ENCODE measurements at regions of chr3 and their contacts with region 1.

Region 1: DNA sequence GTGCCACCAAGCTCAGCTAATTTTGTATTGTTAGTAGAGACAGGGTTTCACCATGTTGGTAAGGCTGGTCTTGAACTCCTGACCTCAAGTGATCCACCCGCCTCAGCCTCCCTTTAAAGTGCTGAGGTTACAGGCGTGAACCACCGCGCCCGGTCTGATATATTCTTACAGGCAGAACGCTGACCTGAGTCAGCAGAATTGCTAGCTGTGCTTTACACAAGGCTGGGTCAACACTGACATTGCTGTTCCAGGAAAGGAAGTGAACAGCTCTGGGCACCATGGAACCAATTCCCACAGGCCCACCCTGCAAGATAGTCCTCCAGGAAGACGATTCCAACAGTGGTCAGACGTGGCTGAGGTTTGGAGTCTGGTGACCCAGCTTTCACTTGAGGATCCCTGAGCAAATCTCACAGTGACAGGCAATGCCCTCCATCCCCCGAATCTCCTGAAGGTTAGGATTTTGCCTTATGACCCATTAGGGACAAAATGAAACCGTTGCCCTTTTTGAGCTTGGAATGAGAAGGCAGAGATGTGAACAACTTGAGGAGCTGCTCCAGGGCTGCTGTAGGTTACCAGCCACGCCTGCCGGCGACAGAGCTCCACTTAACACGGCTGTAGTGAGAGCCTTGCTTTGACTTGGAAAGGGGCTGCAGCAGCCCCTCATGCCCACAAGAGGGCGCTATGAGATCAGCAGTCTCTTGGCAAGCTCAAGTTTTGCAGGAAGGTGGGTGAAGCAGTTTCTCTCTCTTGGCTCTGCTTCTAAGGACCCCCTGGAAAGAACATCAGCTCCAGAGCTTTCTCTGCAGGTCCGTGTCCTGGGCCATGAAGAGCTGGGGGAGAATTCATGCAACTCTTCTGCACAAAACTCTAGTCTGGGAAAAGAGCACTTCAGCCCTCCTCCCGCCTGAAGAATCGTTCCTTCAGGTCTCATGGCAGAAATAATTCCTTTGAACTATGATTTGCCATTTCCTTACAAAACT is 74.1 kb downstream of the SENP2 start:
- DNase-seq: peak; percentile 84
- H3K4me3 Mint-ChIP-seq: no peak overlapping the region
- H3K27ac Mint-ChIP-seq: peak overlapping the region; percentile 86
- H3K4me1 Mint-ChIP-seq: peaks cover 53% of the 10 kb centered on the region
- H3K27me3 Mint-ChIP-seq: no peaks in the 10 kb centered on the region
- CTCF ChIP-seq: peak; percentile 97

Region 2: DNA sequence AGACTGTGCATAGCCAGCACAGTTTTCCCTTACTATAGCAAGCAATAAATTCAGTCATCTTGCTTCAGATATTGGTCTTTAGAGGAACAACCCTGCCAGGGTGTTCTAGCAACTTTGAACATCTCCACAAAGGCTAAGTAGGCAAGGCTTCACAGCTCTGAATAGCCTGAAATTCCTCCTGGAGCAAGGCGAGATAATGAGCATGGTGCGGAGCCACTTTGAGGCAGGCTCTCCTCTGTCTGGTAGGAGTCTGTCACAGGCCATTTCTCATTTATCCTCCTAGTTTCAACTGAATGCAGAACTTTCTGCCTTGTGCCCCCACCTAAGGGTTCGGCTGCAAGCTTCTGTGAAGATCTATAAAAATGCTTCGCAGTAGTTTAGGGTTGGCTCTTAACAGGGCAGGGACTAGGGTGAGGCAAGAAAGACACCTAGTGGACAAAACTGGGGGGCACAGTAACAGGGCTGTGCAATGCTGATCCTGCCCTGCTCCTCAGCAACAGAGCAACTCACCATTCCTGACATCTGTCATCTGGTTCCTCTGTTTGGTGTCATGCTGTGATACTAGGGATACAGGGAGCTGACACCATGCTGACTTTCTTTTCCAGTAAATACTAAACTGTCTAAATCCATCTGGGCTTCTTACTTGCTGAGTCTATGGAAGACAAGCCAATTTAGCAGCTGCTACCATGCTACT is 389.8 kb before region 1 on chr3:
- CTCF ChIA-PET with region 1: no interaction called
- POLR2A ChIA-PET with region 1: no interaction called
- intact Hi-C with region 1: no loop called
- DNase-seq: peak; percentile 41
- H3K4me3 Mint-ChIP-seq: no peak overlapping the region
- H3K27ac Mint-ChIP-seq: no peak overlapping the region
- H3K4me1 Mint-ChIP-seq: no peaks in the 10 kb centered on the region
- H3K27me3 Mint-ChIP-seq: peaks cover 24% of the 10 kb centered on the region
- CTCF ChIP-seq: peak; percentile 34

Region 3: DNA sequence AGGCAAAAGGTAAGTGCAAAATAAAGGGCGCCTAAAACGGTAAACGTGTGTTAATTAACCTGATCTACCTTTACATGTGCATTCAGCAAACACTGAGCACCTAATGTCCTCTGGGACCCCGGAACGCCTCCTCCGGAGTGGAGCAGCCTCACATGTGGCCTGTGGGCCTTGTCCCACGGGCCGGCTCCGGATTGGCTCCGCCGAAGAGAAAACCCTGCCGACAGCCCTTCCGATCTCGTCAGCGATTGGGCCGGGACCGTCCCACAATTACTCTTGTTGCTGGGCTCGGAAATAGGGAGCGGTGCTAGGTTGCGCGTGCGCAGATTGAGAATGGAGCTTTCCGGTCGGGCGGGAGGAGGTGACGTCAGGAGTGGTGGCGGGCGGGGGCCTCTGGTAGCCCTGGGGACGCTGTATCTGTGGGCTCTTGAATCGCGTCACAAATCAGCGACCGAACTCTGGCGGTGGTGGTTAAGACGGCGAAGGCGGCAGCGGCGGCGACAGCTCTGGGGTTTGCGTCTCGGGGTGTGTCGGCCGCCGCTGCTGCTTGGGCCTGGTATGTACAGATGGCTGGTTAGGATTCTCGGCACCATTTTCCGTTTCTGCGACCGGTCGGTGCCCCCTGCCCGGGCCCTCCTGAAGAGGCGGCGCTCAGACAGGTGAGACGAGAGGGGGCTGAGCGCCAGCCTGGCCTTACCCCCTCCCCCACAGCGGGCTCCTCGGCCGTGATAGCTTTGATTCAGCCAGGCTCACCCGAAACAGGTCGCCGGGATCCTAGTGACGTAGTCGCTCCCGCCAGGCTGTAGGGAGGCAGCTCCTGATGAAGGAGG is 74.2 kb before region 1 on chr3 and contains the start of gene SENP2:
- CTCF ChIA-PET with region 1: no interaction called
- POLR2A ChIA-PET with region 1: interaction called, 12 read pairs
- intact Hi-C with region 1: no loop called
- DNase-seq: peak; percentile 99
- H3K4me3 Mint-ChIP-seq: peak within 1 kb of the TSS; percentile 96
- H3K27ac Mint-ChIP-seq: peak within 1 kb of the TSS; percentile 98
- H3K4me1 Mint-ChIP-seq: peaks cover 10% of the 10 kb centered on the region
- H3K27me3 Mint-ChIP-seq: no peaks in the 10 kb centered on the region
- CTCF ChIP-seq: no peak
- total RNA-seq, gene SENP2: 27.0 and 38.5 TPM in 2 replicates

Region 4: GRCh38 chr3:185677146-185677829 is 17.1 kb after region 1 on chr3:
- CTCF ChIA-PET with region 1: interaction called, 94 read pairs
- POLR2A ChIA-PET with region 1: interaction called, 6 read pairs
- intact Hi-C with region 1: no loop called
- DNase-seq: peak; percentile 79
- H3K4me3 Mint-ChIP-seq: no peak overlapping the region
- H3K27ac Mint-ChIP-seq: peak overlapping the region; percentile 63
- H3K4me1 Mint-ChIP-seq: peaks cover 8% of the 10 kb centered on the region
- H3K27me3 Mint-ChIP-seq: no peaks in the 10 kb centered on the region
- CTCF ChIP-seq: peak; percentile 70

Region 5: DNA sequence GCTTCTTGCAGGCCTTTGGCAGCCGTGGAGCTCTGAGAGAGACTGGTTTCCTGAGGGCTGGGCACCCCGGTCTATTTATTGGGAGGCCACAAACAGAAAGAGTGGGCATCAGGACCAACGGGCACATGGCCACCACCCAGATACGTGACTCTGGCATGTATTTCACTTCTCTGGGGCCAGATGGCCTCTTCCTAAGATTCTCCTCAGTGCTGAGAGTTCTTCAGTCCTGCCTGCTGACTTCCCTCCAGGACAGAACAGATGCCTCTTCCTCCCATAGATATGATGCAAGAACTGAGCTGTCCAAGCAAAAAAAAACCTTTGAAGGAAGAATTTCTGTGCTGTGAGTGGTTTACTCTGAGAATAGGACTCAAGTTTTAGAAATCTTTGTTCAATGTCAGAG is 56.9 kb after region 1 on chr3:
- CTCF ChIA-PET with region 1: interaction called, 14 read pairs
- POLR2A ChIA-PET with region 1: interaction called, 19 read pairs
- intact Hi-C with region 1: no loop called
- DNase-seq: peak; percentile 74
- H3K4me3 Mint-ChIP-seq: peak overlapping the region; percentile 40
- H3K27ac Mint-ChIP-seq: peak overlapping the region; percentile 96
- H3K4me1 Mint-ChIP-seq: peaks cover 55% of the 10 kb centered on the region
- H3K27me3 Mint-ChIP-seq: no peaks in the 10 kb centered on the region
- CTCF ChIP-seq: no peak

Region 6: DNA sequence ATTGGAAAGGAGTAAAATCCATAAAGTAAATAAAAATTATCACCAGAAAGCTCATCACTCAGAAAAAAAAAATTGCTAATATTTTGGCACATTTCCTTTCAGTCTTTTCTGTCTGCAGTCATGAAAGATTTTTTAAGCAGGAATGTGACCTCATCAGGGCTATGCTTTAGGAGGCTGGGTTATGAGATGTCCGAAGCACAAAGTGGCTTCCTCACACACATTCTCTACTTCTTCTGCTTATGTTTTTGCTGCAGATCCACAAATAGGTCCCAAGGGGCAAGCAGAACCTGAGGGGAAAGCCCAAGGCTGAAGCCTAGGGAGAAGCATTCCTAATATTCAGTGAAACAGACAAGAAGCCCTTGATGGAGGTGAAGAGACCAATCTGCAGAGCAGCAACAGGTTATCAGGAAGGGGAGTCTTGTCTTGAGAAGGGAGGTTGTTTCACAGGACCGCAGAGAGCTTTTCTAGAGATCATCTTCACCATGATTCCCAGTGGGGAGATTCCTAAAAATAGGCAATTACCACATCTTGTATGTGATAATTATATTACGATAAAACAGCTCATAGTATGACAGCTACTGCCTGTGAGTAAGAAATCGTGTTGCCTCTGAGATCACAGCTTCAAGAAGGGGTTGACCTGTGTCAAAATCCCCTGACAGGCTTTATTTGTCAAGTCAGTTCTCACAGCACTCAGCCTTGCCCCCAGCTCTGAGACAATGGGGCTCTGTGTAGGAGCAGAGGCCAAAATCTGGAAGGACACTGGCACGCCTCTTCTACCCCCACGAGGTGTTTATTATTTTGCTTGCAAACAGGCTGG is 104.1 kb after region 1 on chr3:
- CTCF ChIA-PET with region 1: interaction called, 68 read pairs
- POLR2A ChIA-PET with region 1: interaction called, 6 read pairs
- intact Hi-C with region 1: loop called (anchors 1 kb)
- DNase-seq: no peak
- H3K4me3 Mint-ChIP-seq: no peak overlapping the region
- H3K27ac Mint-ChIP-seq: peak overlapping the region; percentile 35
- H3K4me1 Mint-ChIP-seq: peaks cover 44% of the 10 kb centered on the region
- H3K27me3 Mint-ChIP-seq: no peaks in the 10 kb centered on the region
- CTCF ChIP-seq: no peak

Region 7: GRCh38 chr3:185912929-185913901 is 253.0 kb after region 1 on chr3:
- CTCF ChIA-PET with region 1: interaction called, 18 read pairs
- POLR2A ChIA-PET with region 1: interaction called, 4 read pairs
- intact Hi-C with region 1: no loop called
- DNase-seq: no peak
- H3K4me3 Mint-ChIP-seq: no peak overlapping the region
- H3K27ac Mint-ChIP-seq: no peak overlapping the region
- H3K4me1 Mint-ChIP-seq: no peaks in the 10 kb centered on the region
- H3K27me3 Mint-ChIP-seq: no peaks in the 10 kb centered on the region
- CTCF ChIP-seq: no peak

Region 8: GRCh38 chr3:185937689-185938463 is 277.6 kb after region 1 on chr3 and contains the start of gene TRA2B:
- CTCF ChIA-PET with region 1: interaction called, 6 read pairs
- POLR2A ChIA-PET with region 1: interaction called, 75 read pairs
- intact Hi-C with region 1: loop called (anchors 5 kb)
- DNase-seq: peak; percentile 99
- H3K4me3 Mint-ChIP-seq: peak within 1 kb of the TSS; percentile 98
- H3K27ac Mint-ChIP-seq: peak within 1 kb of the TSS; percentile 100
- H3K4me1 Mint-ChIP-seq: peaks cover 17% of the 10 kb centered on the region
- H3K27me3 Mint-ChIP-seq: no peaks in the 10 kb centered on the region
- CTCF ChIP-seq: no peak
- total RNA-seq, gene TRA2B: 212 and 246 TPM in 2 replicates